ENCODE measurements at regions of chr19 and their contacts with region 1.

Region 1: DNA sequence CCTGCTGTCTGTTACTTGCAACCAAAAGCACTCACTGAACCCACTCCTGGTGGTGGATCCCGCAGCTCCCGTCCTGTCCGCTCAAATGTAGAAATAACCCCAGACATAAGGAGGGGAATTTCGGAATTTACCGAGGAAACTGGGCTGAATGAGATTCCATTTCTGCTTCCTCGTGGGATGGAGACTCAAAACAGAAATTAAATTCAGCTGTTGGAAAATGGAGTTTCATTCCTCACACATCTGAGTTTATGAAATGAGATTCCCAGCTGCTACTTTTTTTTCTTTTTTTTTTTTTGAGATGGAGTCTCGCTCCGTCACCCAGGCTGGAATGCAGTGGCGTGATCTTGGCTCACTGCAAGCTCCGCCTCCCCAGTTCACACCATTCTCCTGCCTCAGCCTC is 44.3 kb downstream of the COLGALT1 start:
- DNase-seq: no peak
- ATAC-seq: no peak
- H3K4me3 ChIP-seq: no peak overlapping the region
- H3K27ac ChIP-seq: no peak overlapping the region
- H3K4me1 ChIP-seq: no peaks in the 10 kb centered on the region
- H3K27me3 ChIP-seq: peaks cover 0 to 39% (median 7%) of the 10 kb centered on the region in 3 donors
- CTCF ChIP-seq: no peak

Region 2: DNA sequence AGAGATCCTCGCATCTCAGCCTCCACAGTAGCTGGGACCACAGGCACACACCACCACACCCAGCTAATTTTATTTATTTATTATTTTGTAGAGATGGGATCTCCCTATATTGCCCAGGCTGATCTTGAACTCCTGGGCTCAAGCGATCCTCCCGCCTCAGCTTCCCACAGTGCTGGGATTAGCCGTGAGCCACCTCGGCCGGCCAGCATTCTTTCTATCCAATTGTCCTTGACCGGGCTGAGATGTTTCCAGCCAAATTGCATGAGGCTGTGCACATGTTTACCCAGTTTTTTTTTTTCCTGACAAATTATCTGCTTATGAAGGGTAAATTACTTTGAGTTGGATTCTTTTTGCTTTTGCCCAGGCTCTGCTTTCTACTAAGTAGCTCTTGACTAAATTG is 60.2 kb after region 1 on chr19:
- intact Hi-C with region 1: loop called in 1 of 2 experiments (anchors 5 kb)
- DNase-seq: no peak
- ATAC-seq: no peak
- H3K4me3 ChIP-seq: no peak overlapping the region
- H3K27ac ChIP-seq: no peak overlapping the region
- H3K4me1 ChIP-seq: no peaks in the 10 kb centered on the region
- H3K27me3 ChIP-seq: peaks cover 0 to 2% (median 0%) of the 10 kb centered on the region in 3 donors
- CTCF ChIP-seq: no peak

Measured in psoas muscle (tissue), 8 donors.